HEK293T (cell line): ENCODE measurements at regions of chr19 and their contacts with region 1.

Region 1: GRCh38 chr19:55605207-55605636 is 225 bp upstream of the ZNF865 start:
- DNase-seq: peak; percentile 93

Region 2: GRCh38 chr19:55563261-55563690 is 41.9 kb before region 1 on chr19:
- CTCF ChIA-PET with region 1: no interaction called
- POLR2A ChIA-PET with region 1: no interaction called
- DNase-seq: no peak

Region 3: GRCh38 chr19:55580628-55581144 is 24.5 kb before region 1 on chr19 and contains the start of gene ZNF579:
- CTCF ChIA-PET with region 1: no interaction called
- POLR2A ChIA-PET with region 1: interaction called, 17 read pairs
- DNase-seq: peak; percentile 83

Region 4: DNA sequence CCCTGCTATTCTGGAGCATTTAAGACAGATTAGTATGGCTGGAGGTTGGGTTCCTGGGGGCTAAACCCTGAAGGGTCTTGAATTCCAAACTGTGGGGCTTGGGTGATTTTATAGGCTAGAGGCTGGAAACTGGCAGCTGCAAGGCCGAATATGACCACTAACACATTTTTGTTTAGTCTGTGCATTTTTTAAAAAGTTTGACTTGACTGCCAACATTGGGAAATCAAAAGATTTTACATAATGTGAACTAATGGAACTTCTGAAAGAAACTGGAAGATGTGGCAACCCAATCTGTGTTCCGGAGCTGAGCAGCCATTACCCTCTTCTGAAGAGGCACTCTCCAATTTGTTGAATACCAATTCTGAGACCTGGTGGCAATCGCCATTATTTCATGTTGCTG is 14.1 kb after region 1 on chr19:
- CTCF ChIA-PET with region 1: interaction called, 5 read pairs
- POLR2A ChIA-PET with region 1: interaction called, 24 read pairs
- DNase-seq: no peak

Region 5: GRCh38 chr19:55624109-55625003 is 19.1 kb after region 1 on chr19 and contains the start of gene ZNF784:
- CTCF ChIA-PET with region 1: interaction called, 5 read pairs
- POLR2A ChIA-PET with region 1: interaction called, 24 read pairs
- DNase-seq: peak; percentile 94

Region 6: DNA sequence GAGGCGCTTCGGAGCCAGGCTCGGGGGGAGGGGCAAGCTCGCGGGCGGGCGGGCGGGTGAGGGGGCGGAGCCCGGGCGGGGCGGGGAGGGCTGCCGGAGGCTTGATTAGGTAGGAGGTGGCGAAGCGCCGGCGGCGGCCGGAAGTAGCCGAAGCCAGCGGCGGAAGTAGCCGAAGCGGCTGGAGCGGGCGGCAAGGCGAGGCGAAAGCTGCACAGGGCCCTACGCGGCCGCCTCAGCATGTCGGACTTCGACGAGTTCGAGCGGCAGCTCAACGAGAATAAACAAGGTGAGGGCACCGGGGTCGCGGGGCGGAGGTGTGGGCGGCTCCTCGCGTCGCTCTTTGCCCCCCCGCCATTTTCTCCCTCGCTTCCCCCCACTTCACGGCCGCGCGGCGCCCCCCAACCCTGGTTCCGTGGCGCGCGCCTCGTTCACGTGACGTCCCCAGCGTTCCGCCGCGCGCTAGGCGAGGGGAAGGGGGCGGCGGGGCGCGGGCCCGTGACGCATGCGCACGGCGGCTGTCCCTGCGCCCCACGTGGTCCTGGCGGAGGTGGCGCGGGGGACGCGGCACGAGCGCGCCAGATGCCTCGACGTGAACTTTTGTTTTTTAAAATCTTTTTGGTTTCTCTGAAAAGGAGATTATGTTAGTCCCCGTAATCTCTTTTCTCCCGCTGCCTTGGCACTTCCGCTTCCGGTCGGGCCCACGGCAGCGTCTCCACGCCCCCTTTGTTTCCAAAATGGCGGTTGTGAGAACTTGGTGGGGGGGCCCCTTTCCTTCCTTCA is 49.8 kb after region 1 on chr19 and contains the start of gene U2AF2:
- CTCF ChIA-PET with region 1: no interaction called
- POLR2A ChIA-PET with region 1: no interaction called
- DNase-seq: peak; percentile 92

Region 7: GRCh38 chr19:55688422-55689246 is 83.4 kb after region 1 on chr19:
- CTCF ChIA-PET with region 1: no interaction called
- POLR2A ChIA-PET with region 1: no interaction called
- DNase-seq: no peak